OCI-LY7 (cell line): ENCODE measurements at regions of chr4 and their contacts with region 1.

Region 1: GRCh38 chr4:139229534-139230039 is 50.4 kb downstream of the MGARP start:
- DNase-seq: peak; percentile 75
- H3K4me3 ChIP-seq: no peak overlapping the region
- H3K27ac ChIP-seq: peak overlapping the region; percentile 29
- H3K4me1 ChIP-seq: peaks cover 76% of the 10 kb centered on the region
- CTCF ChIP-seq: peak; percentile 88

Region 2: DNA sequence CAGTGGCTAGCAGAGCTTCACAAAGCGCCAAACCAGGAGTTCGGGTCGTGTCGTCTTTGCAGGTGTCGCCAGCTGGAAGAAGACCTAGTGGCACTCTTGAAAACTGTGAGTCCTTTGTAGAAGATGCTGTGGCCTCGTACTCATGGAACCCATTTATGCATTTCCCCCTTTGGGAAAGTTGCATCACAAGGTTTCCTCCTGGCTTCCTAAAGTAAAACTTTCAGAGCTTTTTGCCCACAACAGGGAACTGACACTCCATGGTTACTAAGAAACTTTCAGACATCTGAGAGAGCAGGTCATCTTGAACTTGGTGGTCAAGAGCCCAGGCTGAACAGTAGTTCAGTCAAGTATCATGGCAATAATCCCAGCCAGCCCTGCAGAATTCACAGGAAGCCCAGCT is 229.9 kb before region 1 on chr4:
- CTCF ChIA-PET with region 1: no interaction called
- POLR2A ChIA-PET with region 1: no interaction called
- intact Hi-C with region 1: no loop called
- DNase-seq: no peak
- H3K4me3 ChIP-seq: no peak overlapping the region
- H3K27ac ChIP-seq: no peak overlapping the region
- H3K4me1 ChIP-seq: no peaks in the 10 kb centered on the region
- CTCF ChIP-seq: no peak

Region 3: DNA sequence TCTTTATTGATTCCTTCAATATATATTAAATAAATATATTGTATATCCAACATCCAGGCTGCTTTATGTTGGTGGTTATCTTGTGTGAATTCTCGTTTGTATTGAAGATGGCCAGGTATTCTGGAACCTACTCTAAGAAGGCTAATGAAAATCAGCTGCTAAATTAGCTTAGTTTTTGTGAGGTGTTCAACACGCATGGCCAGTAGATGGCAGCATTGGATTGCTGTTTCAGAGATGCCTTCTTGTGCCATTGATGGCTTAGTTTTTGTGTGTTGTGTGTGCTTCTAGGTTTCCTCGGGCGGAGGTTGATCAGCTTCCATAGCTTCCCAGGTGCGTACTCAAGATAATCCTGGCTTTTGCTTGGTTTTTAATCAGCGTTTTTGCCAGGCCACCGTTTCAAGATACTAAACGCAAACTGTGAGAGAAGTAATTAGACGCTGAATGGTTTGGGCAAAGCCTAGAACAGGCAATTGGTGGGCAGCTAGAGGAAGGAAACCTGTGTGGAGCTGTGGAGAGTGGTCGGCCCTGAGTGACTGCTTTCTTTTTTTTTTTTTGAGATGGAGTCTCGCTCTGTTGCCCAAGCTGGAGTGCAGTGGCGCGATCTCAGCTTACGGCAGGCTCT is 198.9 kb before region 1 on chr4:
- CTCF ChIA-PET with region 1: no interaction called
- POLR2A ChIA-PET with region 1: no interaction called
- intact Hi-C with region 1: loop called (anchors 5 kb)
- DNase-seq: peak; percentile 86
- H3K4me3 ChIP-seq: no peak overlapping the region
- H3K27ac ChIP-seq: no peak overlapping the region
- H3K4me1 ChIP-seq: peaks cover 11% of the 10 kb centered on the region
- CTCF ChIP-seq: peak; percentile 97

Region 4: DNA sequence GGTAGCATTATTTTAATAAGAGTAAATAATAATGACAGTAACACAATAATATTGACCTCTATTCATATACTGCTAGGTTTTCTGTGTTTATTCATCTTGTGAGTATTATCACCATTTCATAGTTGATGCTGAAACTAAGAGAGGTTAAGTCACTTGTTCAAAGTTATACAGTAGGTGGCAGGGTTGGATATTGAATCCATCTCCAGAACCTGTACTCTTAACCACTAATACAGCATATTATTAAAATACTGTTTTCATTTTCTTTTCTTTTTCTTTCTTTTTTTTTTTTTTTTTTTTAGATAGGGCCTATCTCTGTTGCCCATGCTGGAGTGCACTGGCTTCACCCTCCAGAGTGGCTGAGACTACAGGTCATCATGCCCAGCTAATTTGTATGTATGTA is 45.5 kb before region 1 on chr4:
- CTCF ChIA-PET with region 1: no interaction called
- POLR2A ChIA-PET with region 1: interaction called, 4 read pairs
- intact Hi-C with region 1: loop called (anchors 2 kb)
- DNase-seq: peak; percentile 48
- H3K4me3 ChIP-seq: no peak overlapping the region
- H3K27ac ChIP-seq: no peak overlapping the region
- H3K4me1 ChIP-seq: peaks cover 4% of the 10 kb centered on the region
- CTCF ChIP-seq: peak; percentile 77

Region 5: GRCh38 chr4:139207247-139207646 is 22.3 kb before region 1 on chr4:
- CTCF ChIA-PET with region 1: no interaction called
- POLR2A ChIA-PET with region 1: no interaction called
- intact Hi-C with region 1: no loop called
- DNase-seq: no peak
- H3K4me3 ChIP-seq: no peak overlapping the region
- H3K27ac ChIP-seq: no peak overlapping the region
- H3K4me1 ChIP-seq: peaks cover 12% of the 10 kb centered on the region
- CTCF ChIP-seq: no peak

Region 6: DNA sequence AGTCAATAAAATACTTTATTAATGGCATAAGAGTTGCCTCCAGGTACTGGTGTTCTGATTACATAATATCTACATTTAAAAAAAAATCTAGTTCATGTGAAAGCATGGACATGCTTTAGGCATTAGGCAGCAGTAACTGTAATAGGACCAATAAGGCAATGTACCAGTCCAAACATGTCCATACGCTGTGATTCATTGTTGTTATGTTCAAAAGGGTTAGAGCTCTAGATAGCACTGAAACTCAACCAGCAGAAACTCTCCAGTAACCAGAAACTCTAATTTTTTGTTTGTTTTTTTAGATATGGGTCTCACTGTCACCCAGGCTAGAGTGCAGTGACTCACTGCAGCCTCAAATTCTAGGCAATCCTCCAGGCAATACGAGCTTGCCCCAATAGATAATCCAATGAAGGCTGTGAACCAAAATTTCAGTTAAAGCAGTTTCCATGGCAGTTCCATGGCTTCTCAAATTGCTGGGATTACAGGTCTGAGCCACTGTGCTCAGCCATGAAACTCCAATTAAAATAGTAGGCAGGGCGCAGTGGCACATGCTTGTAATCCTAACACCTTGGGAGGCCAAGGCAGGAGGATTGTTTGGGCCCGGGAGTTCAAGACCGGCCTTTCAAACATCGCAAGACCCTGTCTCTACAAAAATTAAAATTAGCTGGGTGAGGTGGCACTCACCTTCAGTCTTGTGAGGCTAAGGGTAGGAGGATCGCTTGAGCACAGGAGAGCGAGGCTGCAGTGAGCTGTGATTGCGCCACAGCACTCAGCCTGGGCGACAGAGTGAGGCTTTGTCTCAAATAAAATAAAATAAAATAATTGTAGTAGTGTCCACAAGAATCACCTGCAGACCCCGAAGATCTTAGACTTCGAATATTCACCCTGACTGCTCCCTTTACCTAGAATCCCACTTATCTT is 14.1 kb after region 1 on chr4:
- CTCF ChIA-PET with region 1: no interaction called
- POLR2A ChIA-PET with region 1: interaction called, 26 read pairs
- intact Hi-C with region 1: no loop called
- DNase-seq: no peak
- H3K4me3 ChIP-seq: no peak overlapping the region
- H3K27ac ChIP-seq: no peak overlapping the region
- H3K4me1 ChIP-seq: peaks cover 25% of the 10 kb centered on the region
- CTCF ChIP-seq: no peak

Region 7: DNA sequence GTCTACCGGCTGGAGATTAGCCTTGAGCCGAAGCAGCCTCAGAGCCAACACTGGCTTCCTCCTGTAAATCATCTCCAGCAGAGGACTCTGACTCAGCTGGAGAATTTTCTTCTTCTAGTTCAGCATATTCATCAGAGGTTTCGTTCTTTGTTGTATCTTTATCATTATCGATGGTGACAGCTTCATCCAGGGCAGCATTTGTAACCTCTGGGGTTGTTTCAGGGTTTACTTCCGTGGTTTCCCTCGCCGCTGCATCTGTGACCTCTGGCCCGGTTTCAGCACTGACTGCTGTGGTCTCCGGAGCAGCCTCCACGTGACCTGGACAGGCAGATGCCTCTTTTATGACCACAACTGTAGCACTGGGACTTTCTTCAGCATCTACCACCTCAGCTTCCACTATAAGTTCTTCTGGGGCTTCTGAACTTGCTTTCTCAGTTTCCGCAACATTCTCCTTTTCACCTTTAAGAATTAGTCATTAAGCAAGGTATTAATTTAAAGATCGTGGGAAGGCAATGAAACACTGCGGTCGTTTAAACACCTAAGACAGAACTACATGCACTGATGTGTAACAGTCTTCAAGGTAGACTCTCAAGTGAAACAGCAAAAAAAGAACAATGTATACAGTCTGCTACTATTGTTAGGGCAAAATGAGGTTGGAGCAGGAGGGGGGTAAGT is 37.1 kb after region 1 on chr4:
- CTCF ChIA-PET with region 1: interaction called, 4 read pairs
- POLR2A ChIA-PET with region 1: interaction called, 22 read pairs
- intact Hi-C with region 1: loop called (anchors 2 kb)
- DNase-seq: peak; percentile 86
- H3K4me3 ChIP-seq: peak overlapping the region; percentile 68
- H3K27ac ChIP-seq: peak overlapping the region; percentile 78
- H3K4me1 ChIP-seq: peaks cover 39% of the 10 kb centered on the region
- CTCF ChIP-seq: no peak

Region 8: GRCh38 chr4:139295206-139295941 is 65.8 kb after region 1 on chr4:
- CTCF ChIA-PET with region 1: interaction called, 11 read pairs
- POLR2A ChIA-PET with region 1: interaction called, 11 read pairs
- intact Hi-C with region 1: loop called (anchors 1 kb)
- DNase-seq: peak; percentile 97
- H3K4me3 ChIP-seq: peak overlapping the region; percentile 86
- H3K27ac ChIP-seq: peak overlapping the region; percentile 65
- H3K4me1 ChIP-seq: peaks cover 32% of the 10 kb centered on the region
- CTCF ChIP-seq: peak; percentile 95

Region 9: GRCh38 chr4:139453371-139454110 is 224.0 kb after region 1 on chr4:
- CTCF ChIA-PET with region 1: no interaction called
- POLR2A ChIA-PET with region 1: interaction called, 6 read pairs
- intact Hi-C with region 1: loop called (anchors 5 kb)
- DNase-seq: peak; percentile 97
- H3K4me3 ChIP-seq: peak overlapping the region; percentile 82
- H3K27ac ChIP-seq: peak overlapping the region; percentile 88
- H3K4me1 ChIP-seq: peaks cover 43% of the 10 kb centered on the region
- CTCF ChIP-seq: peak; percentile 48; the same call in 1 of the 2 replicates